Heart right ventricle (tissue), 16 donors: ENCODE measurements at regions of chr16 and their contacts with region 1.

Region 1: DNA sequence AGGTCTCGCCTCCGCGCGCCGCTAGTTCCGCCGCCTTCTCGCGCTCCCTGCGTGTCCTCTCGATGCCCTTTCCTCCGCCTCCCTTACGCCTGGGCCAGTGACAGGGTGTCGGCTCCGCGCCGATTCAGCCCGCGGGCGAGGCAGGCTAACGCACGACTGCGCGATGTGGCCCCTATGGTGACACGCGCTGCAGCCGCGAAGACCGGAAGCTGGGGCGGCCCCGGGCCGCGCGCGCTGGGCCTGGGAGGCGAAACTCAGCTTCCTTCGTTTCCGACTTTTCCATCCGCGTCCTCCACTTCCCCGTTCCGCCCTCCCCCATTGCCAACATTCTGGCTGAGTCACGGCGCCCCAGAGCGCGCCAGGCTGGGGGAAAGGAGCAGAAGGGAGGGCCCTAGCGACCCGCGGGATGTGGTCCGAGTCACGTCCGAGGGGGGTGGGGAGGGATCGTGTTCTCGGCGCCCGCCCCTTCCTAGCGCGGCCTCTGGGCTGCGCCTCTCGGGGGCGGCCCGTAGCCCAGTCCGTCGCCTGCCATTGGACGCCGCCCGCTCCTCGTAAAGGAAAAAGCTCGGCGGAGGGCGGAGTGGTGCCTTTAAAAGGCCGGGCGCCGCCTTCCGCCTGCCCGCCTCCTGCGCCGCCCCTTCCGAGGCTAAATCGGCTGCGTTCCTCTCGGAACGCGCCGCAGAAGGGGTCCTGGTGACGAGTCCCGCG is at the start of gene ALDOA:
- DNase-seq: peak; percentile 98
- ATAC-seq: peak; percentile 88 to 94 (median 91)
- H3K4me3 ChIP-seq: peak within 1 kb of the TSS; percentile 79 to 100 (median 92)
- H3K27ac ChIP-seq: peak within 1 kb of the TSS; percentile 97 to 100 (median 98)
- H3K4me1 ChIP-seq: peaks cover 19 to 68% (median 54%) of the 10 kb centered on the region in 9 donors
- H3K27me3 ChIP-seq: no peaks in the 10 kb centered on the region
- CTCF ChIP-seq: no peak
- total RNA-seq, gene ALDOA: 3,057 to 4,582 (median 3,914) TPM

Region 2: DNA sequence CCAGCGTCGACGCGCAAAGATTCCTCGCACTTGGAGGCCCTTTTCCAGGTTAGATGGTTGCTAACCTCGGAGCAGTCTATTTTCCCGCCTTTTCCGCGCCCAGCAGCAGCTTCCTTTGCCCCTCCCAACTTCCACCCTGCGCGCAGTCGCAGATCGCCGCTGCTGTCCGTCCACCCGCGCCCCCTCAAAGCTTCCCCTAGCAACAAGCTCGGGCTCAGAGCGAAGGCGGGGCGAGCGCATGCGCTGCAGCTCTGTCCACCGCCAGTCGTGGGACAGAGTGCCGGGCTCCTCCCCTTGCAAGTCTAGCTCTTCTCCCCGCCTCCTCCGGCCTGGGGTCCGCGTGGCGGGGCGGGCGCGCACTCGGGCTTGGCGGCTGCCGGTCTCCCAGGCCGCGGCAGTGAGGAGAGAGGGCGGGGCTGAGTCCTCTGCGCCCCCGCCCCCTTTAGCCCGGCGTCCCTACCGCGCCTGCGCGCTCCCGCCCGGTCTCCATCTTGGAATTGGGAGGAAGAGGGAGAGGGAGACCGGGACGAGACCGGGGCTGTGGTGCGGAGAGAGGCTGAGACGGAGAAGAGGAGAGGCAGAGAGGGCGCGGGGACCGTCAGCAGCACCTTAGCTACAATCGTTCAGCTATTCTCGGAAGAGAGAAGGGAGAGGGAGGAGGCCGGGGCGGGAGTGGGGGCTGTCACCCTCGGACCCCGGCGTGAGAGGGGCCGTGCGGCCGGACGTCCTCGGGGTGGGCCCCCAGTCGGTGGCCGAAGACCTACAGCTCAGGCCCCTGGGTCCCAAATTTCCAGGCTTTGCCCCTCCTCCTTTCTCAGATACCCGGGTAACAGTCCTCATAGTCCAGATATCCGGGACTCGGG is 91.7 kb before region 1 on chr16 and contains the start of gene TAOK2:
- intact Hi-C with region 1: loop called in 1 of 10 experiments (anchors 5 kb)
- DNase-seq: peak; percentile 99
- ATAC-seq: peak; percentile 96 to 98 (median 98)
- H3K4me3 ChIP-seq: peak within 1 kb of the TSS; percentile 69 to 99 (median 81)
- H3K27ac ChIP-seq: peak within 1 kb of the TSS; percentile 85 to 100 (median 94)
- H3K4me1 ChIP-seq: peaks cover 3 to 49% (median 38%) of the 10 kb centered on the region in 9 donors
- H3K27me3 ChIP-seq: no peaks in the 10 kb centered on the region
- CTCF ChIP-seq: peak in 1 of 9 donors; percentile 5
- total RNA-seq, gene TAOK2: 27.0 to 40.6 (median 32.7) TPM

Region 3: GRCh38 chr16:30075507-30076275 is 10.4 kb after region 1 on chr16 and contains the start of gene PPP4C:
- intact Hi-C with region 1: loop called in 1 of 10 experiments (anchors 1 kb)
- DNase-seq: peak; percentile 92 to 93
- ATAC-seq: peak; percentile 86 to 97 (median 95)
- H3K4me3 ChIP-seq: peak within 1 kb of the TSS; percentile 86 to 100 (median 98)
- H3K27ac ChIP-seq: peak within 1 kb of the TSS; percentile 48 to 99 (median 96)
- H3K4me1 ChIP-seq: peaks cover 13 to 55% (median 41%) of the 10 kb centered on the region in 9 donors
- H3K27me3 ChIP-seq: no peaks in the 10 kb centered on the region
- CTCF ChIP-seq: peak in 3 of 9 donors; percentile 24 to 44 (median 34)
- total RNA-seq, gene PPP4C: 35.2 to 50.0 (median 42.4) TPM

Region 4: GRCh38 chr16:30091474-30092372 is 26.4 kb after region 1 on chr16 and contains the start of gene TBX6:
- intact Hi-C with region 1: loop called in 1 of 10 experiments (anchors 2 kb)
- DNase-seq: peak; percentile 92 to 95
- ATAC-seq: peak; percentile 90 to 94 (median 92)
- H3K4me3 ChIP-seq: peak within 1 kb of the TSS; percentile 39 to 65 (median 56)
- H3K27ac ChIP-seq: peak within 1 kb of the TSS; percentile 39 to 95 (median 88)
- H3K4me1 ChIP-seq: peaks cover 7 to 78% (median 45%) of the 10 kb centered on the region in 9 donors
- H3K27me3 ChIP-seq: no peaks in the 10 kb centered on the region
- CTCF ChIP-seq: peak; percentile 68 to 95 (median 79)
- total RNA-seq, gene TBX6: 0.28 to 1.4 (median 0.57) TPM

Region 5: DNA sequence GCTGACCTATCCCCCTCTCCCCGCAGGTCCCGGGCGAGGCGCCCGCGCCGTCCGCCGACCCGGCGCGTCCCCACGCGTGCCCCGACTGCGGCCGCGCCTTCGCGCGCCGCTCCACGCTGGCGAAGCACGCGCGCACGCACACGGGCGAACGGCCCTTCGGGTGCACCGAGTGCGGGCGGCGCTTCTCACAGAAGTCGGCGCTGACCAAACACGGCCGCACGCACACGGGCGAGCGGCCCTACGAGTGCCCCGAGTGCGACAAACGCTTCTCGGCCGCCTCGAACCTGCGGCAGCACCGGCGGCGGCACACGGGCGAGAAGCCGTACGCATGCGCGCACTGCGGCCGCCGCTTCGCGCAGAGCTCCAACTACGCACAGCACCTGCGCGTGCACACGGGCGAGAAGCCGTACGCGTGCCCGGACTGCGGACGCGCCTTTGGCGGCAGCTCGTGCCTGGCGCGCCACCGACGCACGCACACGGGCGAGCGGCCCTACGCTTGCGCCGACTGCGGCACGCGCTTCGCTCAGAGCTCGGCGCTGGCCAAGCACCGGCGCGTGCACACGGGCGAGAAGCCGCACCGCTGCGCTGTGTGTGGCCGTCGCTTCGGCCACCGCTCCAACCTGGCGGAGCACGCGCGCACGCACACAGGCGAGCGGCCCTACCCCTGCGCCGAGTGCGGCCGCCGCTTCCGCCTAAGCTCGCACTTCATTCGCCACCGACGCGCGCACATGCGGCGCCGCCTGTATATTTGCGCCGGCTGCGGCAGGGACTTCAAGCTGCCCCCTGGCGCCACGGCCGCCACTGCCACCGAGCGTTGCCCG is 352.4 kb after region 1 on chr16:
- intact Hi-C with region 1: loop called in 1 of 10 experiments (anchors 10 kb)
- DNase-seq: peak; percentile 78 to 89
- ATAC-seq: peak; percentile 92 to 96 (median 94)
- H3K4me3 ChIP-seq: peak overlapping the region; percentile 20 to 77 (median 65)
- H3K27ac ChIP-seq: peak overlapping the region; percentile 58 to 91 (median 78)
- H3K4me1 ChIP-seq: peaks cover 3 to 17% (median 11%) of the 10 kb centered on the region in 9 donors
- H3K27me3 ChIP-seq: no peaks in the 10 kb centered on the region
- CTCF ChIP-seq: peak in 6 of 9 donors; percentile 14 to 51 (median 36)

Region 6: DNA sequence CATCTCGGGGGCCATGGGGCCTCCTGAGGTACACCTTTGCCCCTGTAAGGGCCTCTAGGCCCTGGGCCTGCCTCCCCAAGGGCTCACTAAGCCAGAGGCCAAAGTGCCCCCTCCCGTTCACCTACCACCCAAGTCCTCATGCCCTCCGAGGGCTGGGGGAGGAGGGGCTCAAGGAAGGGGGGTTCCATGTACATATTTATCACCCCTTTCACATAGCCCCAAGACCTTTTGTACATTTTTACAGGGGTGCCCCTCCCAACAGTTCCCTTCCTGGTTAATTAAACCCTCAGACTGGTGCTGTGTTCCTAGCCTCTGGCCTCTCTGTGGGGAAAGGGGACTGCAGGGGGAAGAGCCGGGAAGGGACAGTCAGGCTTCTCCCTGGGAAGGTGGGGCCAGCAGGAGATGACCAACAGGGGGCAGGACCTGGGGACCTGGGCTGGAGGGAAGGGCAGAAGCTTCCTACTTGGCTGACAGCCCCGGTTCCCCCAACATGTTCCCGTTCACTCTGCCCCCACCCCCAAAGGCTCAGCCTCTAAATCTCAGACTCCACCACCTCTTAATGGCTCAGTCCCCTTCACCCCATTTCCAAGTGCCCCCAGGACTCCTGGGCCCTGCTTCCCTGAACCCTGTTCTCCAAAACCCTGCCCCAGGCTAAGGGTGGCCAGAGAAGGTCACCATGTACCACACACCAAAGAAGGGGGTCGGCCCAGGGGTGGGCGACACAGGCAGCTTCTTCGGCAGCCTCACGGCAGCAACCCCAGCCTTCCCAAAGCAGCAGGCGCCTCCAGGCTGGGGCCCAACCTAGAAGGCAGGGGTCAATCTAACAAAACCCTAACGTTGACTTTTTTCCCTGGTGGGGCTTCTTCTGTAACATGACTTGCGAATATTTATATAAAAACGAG is 604.9 kb after region 1 on chr16:
- intact Hi-C with region 1: no loop called
- DNase-seq: no peak
- ATAC-seq: peak in 2 of 8 donors; percentile 16 to 22
- H3K4me3 ChIP-seq: no peak overlapping the region
- H3K27ac ChIP-seq: no peak overlapping the region
- H3K4me1 ChIP-seq: no peaks in the 10 kb centered on the region
- H3K27me3 ChIP-seq: no peaks in the 10 kb centered on the region
- CTCF ChIP-seq: no peak